ENCODE measurements at regions of chr22 and their contacts with region 1.

Region 1: DNA sequence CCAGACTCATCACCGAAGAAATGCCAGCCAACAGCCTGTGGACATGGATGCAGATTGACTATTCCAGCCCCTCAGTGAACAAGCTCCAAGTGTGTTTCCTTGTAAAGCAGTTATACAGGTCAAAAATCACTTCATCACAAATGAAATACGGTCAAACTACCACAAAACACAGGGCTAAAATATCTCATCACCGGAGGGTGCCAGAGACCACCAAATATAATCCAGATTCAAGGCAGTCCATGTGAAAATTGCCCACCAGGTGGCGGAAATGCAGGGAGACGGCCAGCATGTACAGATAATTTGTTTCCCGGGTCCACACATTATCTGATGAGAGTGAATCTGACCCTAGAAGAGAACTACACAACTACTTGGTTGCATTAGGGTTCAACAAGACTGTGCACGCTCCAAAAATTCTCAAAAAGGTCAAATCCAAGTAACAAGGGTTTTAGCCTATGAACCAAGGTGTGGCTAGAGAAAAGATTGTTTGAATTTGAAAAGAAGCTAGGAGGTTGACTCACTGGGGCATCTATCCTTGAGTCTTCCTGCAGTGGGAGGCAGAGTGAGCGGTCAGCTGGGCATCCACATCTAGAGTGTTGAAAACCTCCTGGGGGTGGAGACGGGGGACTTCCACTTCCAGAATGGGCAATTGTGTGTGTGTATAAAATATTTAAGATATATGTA is 71.7 kb downstream of the IGLL5 start:
- DNase-seq: peak; percentile 90
- ATAC-seq: peak; percentile 75
- H3K4me3 Mint-ChIP-seq: no peak overlapping the region
- H3K27ac Mint-ChIP-seq: no peak overlapping the region
- H3K4me1 Mint-ChIP-seq: no peaks in the 10 kb centered on the region
- H3K27me3 Mint-ChIP-seq: peaks cover 12% of the 10 kb centered on the region
- CTCF ChIP-seq: peak; percentile 96

Region 2: DNA sequence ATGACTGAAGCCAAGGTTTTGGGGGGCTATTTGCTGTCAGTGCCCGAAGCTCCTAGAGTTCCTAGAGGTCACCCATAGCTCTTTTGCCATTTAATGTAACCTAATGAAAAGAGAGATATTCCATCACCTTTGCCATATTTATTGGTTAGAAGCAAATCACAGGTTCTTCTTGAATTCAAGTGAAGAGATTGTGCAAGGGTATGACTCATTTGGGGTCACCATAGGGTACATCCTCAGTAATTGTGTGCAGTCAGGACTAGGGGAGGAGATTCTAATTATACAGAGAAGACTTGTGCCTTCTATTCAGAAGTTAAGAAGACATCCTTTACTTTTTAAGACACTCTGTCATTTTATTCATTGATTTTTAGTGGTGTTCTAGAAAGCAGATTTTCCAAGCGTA is 393.3 kb before region 1 on chr22:
- CTCF ChIA-PET with region 1: no interaction called
- POLR2A ChIA-PET with region 1: no interaction called
- intact Hi-C with region 1: no loop called
- DNase-seq: no peak
- ATAC-seq: no peak
- H3K4me3 Mint-ChIP-seq: no peak overlapping the region
- H3K27ac Mint-ChIP-seq: no peak overlapping the region
- H3K4me1 Mint-ChIP-seq: no peaks in the 10 kb centered on the region
- H3K27me3 Mint-ChIP-seq: peaks cover 18% of the 10 kb centered on the region
- CTCF ChIP-seq: no peak

Region 3: DNA sequence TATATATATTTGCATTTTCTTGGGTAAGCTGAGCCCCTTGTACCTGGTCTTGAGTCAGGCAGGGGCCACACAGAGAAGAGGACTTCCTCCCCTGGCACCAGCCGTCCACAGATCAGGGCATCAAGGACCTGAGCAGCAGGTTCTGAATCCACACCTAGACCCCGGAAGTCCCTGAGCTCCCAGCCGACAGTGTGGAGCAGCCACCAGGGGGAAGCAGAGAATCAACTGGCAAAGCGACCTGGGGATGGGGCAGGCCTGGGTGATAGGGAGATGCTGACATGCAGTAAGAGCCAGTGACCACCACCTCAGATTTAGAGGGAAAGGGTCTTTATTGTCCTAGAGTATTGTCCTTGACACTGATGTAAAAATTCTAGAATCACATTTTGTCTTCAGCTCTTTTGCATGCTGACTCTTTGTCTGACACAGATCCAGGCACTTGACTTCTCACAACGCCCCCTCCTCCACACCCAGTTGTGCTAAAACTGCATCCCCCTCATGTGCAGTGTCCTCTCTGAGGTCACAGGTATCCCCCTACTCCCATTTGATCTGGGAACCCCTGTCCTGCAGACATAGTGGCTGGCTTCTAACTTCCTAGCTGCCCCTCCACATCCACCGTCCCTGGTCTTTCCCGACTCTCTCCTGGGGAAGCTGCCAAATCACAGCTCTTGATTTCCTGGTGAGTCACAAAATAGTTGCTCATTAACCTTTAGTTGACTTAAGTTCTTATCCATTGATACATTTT is 205.6 kb before region 1 on chr22:
- CTCF ChIA-PET with region 1: interaction called, 35 read pairs
- POLR2A ChIA-PET with region 1: no interaction called
- intact Hi-C with region 1: no loop called
- DNase-seq: peak; percentile 89
- ATAC-seq: peak; percentile 98
- H3K4me3 Mint-ChIP-seq: no peak overlapping the region
- H3K27ac Mint-ChIP-seq: peak overlapping the region; percentile 81
- H3K4me1 Mint-ChIP-seq: peaks cover 51% of the 10 kb centered on the region
- H3K27me3 Mint-ChIP-seq: no peaks in the 10 kb centered on the region
- CTCF ChIP-seq: peak; percentile 92

Region 4: DNA sequence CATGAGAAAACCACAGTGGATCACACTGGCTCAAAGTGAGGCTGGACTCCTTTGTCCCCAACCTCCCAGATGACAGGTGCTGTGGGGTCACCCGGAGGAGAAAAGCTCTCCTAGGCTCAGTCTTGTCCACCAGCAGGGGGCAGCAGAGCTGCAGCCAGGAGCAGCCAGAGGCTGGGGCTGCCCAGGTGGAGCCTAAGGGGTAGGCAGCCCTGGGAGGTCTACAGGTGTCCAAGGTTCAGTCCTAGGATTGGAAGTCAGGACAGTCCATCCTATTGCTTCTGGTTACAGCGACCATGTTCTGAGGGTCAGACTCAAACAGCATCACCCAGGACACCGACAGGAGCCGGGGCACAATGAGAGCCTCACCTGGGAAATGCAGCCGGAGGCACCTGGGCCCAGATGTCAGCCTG is 149.3 kb before region 1 on chr22:
- CTCF ChIA-PET with region 1: interaction called, 41 read pairs
- POLR2A ChIA-PET with region 1: no interaction called
- intact Hi-C with region 1: no loop called
- DNase-seq: peak; percentile 72
- ATAC-seq: peak; percentile 78
- H3K4me3 Mint-ChIP-seq: no peak overlapping the region
- H3K27ac Mint-ChIP-seq: no peak overlapping the region
- H3K4me1 Mint-ChIP-seq: peaks cover 25% of the 10 kb centered on the region
- H3K27me3 Mint-ChIP-seq: no peaks in the 10 kb centered on the region
- CTCF ChIP-seq: peak; percentile 72

Region 5: DNA sequence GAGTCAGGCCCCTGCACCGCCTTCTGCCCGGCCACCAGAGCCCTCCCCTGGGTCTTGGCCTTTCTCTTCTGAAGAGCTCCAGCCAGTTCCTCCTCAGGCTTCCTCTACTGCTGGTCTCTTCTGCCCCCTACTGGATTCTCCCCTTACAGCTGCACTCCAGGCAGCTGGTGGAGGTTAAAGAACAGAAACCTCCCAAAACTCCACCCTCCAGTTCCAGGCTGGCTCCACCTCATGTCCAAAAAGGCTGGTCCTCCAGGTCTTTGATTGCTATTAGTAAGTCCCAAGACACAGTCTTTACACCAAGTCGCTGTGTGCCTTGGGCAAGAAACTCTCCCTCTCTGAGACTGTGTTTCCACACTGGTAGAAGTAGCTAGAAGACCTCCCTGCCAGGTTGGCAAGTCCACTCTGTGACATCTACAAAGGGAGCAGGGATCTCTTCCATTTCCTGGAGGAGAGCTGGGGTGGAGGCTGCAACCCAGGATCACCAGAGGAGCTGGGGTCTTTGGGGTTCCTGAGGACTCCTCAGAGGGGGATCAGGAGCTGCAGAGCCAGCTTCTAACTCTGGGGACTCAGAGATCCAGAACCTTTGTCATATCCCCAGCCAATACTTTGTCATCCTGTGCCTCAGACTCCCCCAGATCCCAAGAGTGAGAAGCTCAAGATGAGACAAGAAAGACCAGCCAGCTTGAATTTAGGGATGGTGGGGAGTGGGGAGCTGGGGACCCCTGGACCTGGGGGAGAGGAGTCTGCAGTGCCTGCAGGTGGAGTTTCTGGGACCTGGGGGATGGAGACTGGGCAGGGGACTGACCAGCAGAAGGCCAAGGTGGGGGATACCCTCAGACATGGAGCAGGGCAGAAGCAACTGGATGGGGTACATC is 75.0 kb before region 1 on chr22:
- CTCF ChIA-PET with region 1: interaction called, 61 read pairs
- POLR2A ChIA-PET with region 1: no interaction called
- intact Hi-C with region 1: loop called (anchors 5 kb)
- DNase-seq: peak; percentile 83
- ATAC-seq: peak; percentile 72
- H3K4me3 Mint-ChIP-seq: no peak overlapping the region
- H3K27ac Mint-ChIP-seq: no peak overlapping the region
- H3K4me1 Mint-ChIP-seq: peaks cover 18% of the 10 kb centered on the region
- H3K27me3 Mint-ChIP-seq: peaks cover 15% of the 10 kb centered on the region
- CTCF ChIP-seq: peak; percentile 78

Region 6: GRCh38 chr22:23012081-23012622 is 52.9 kb after region 1 on chr22:
- CTCF ChIA-PET with region 1: interaction called, 15 read pairs
- POLR2A ChIA-PET with region 1: no interaction called
- intact Hi-C with region 1: no loop called
- DNase-seq: peak; percentile 80
- ATAC-seq: peak; percentile 93
- H3K4me3 Mint-ChIP-seq: no peak overlapping the region
- H3K27ac Mint-ChIP-seq: peak overlapping the region; percentile 55
- H3K4me1 Mint-ChIP-seq: peaks cover 28% of the 10 kb centered on the region
- H3K27me3 Mint-ChIP-seq: peaks cover 41% of the 10 kb centered on the region
- CTCF ChIP-seq: no peak

Region 7: DNA sequence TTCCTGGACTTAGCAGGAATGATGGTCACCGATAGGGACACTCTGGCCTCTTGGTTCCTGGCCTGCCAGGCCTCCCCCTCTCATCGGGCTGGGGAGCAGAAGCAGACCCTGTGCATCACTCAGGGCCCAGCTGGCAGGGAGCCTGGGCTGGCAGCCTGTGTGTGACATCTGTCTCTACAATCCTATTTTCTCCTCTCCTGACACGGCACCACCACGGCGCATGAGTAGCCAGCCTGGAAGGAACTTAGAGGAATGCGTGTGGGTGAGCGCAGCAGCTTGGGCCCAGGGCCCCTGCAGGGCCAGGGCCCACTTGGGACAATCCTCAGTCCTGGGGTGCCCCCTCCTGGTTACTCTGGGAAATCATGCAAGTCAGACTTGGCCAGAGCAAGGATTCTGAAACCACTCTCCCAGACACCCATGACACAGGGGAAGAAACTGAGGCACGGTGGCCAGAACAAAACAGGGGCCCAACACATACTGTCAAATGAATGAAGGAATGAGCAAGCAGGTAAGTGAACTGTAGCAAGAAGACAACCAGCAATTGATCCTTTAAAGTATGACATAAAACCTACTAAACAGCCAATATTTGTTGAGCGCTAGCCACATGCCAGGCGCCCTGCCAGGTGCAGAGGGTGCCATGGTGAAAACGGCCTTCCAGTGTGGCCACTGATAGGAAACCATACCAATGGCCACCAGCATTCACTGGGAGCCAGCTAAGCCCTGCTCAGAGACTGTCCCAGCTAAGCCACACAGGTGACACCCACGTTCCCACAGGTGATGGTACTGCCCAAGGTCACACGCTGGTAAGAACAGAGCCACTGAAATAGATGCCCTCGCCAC is 169.2 kb after region 1 on chr22:
- CTCF ChIA-PET with region 1: interaction called, 274 read pairs
- POLR2A ChIA-PET with region 1: no interaction called
- intact Hi-C with region 1: loop called (anchors 1 kb)
- DNase-seq: peak; percentile 80
- ATAC-seq: peak; percentile 93
- H3K4me3 Mint-ChIP-seq: no peak overlapping the region
- H3K27ac Mint-ChIP-seq: no peak overlapping the region
- H3K4me1 Mint-ChIP-seq: no peaks in the 10 kb centered on the region
- H3K27me3 Mint-ChIP-seq: no peaks in the 10 kb centered on the region
- CTCF ChIP-seq: peak; percentile 76

Region 8: GRCh38 chr22:23385291-23386244 is 426.3 kb after region 1 on chr22:
- CTCF ChIA-PET with region 1: interaction called, 12 read pairs
- POLR2A ChIA-PET with region 1: no interaction called
- intact Hi-C with region 1: loop called (anchors 5 kb)
- DNase-seq: peak; percentile 87
- ATAC-seq: peak; percentile 93
- H3K4me3 Mint-ChIP-seq: no peak overlapping the region
- H3K27ac Mint-ChIP-seq: no peak overlapping the region
- H3K4me1 Mint-ChIP-seq: no peaks in the 10 kb centered on the region
- H3K27me3 Mint-ChIP-seq: peaks cover 2% of the 10 kb centered on the region
- CTCF ChIP-seq: peak; percentile 95

Measured in activated CD8-positive, alpha-beta T cell treated with anti-CD3 and anti-CD28 coated beads for 36 hours (primary cell).